Transverse colon (tissue), 4 donors: ENCODE measurements at regions of chr6 and their contacts with region 1.

Region 1: DNA sequence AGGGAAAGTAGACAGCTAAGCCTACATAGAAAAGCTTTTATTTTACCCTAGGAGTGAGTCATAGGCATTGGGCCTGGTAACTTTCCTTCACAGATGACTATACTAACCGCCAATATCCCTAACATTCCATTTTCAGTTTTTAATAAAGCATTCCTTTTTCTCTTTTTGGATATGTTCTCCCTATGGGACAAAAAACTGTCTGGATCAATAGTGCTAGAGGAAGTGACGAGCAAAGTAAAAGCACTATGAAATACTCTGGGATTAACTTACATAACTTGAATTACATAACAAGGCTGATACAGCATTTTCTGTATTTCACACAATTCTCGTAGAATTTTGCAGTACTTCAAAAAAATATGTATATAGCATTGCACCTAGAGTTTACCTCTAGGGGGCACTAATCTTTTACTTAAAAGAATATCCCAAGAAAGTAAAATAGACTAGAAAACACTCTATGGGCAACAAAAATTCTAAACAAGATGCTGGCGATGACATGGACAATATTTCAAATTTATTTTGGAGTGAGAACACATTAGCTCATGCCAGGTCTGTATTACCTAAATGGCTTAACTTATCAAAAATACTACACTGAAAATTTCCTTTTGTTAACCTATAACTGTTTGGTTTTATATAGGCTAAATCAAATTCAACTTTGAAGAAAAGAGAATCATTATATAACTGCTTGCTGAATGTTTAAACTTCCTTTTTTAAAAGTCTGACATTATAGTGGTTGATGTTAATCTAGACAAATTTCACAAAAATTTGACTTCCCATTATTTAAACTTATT is 66.3 kb upstream of the DST start:
- DNase-seq: no peak
- H3K4me3 ChIP-seq: no peak overlapping the region
- H3K27ac ChIP-seq: peak overlapping the region; percentile 10 to 47 (median 26)
- H3K4me1 ChIP-seq: peaks cover 0 to 40% (median 7%) of the 10 kb centered on the region in 4 donors
- H3K27me3 ChIP-seq: no peaks in the 10 kb centered on the region
- CTCF ChIP-seq: peak; percentile 65 to 71 (median 66)
- EP300 ChIP-seq: no peak
- POLR2A ChIP-seq: no peak

Region 2: DNA sequence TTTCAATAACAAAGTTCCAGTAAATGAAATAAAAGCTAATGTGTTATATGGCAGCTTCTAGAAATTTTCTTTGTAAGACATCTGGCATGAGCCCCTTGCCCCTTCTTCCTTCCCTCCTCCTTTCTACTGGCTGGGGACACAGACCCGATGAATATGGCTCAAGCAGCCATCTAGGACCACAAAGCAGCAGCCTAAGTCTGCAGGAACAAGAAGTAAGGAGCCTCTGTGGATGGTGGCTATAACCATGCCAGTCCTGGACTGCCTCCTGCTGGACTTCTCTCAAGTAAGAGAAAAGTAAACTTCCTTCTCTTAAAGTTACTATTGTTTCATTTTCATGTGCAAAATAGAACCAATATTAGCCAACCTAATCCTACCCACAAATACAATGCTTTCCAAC is 48.6 kb after region 1 on chr6:
- in situ Hi-C with region 1: no loop called
- intact Hi-C with region 1: loop called (anchors 2 kb)
- DNase-seq: peak; percentile 52
- H3K4me3 ChIP-seq: no peak overlapping the region
- H3K27ac ChIP-seq: peak overlapping the region in 3 of 4 donors; percentile 19 to 47 (median 28)
- H3K4me1 ChIP-seq: peaks cover 4 to 44% (median 16%) of the 10 kb centered on the region in 4 donors
- H3K27me3 ChIP-seq: no peaks in the 10 kb centered on the region
- CTCF ChIP-seq: peak; percentile 54 to 67 (median 55)
- EP300 ChIP-seq: no peak
- POLR2A ChIP-seq: no peak

Region 3: DNA sequence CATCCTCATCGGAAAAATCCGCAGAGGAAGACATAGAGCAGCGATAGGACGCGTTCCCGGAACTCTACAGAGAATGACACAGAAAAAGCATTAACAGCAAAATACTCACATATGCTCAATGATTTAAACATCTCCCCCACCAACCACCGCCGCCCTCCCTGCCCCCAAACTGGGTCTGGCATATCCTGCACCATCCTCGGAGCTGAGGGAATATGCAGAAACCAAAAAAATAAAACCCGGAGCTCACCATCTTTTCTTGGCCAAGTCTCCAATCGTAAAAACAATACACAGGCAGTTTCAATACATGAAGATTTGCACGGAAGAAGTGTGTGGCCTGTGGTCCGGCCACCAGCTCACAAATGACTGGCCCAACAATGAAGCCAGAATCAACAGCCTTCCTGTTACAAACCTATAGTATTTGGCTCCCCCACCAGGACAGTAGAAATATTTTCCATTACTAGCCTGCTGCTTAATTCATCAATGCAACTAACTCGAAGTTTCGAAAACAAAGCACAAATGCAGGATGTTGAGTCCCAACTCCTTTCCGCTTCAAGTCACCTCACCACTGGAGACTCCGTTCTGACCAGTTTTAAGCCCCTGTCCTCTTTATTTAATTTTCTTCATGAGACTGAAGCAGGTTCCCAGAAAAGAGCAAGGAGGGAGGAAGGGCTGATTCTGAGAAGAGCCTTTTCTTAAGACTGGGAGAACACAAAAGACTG is 142.7 kb after region 1 on chr6:
- in situ Hi-C with region 1: loop called in 2 of 4 experiments (anchors 25 kb)
- intact Hi-C with region 1: no loop called
- DNase-seq: no peak
- H3K4me3 ChIP-seq: peak overlapping the region in 3 of 4 donors; percentile 20 to 47 (median 33)
- H3K27ac ChIP-seq: peak overlapping the region; percentile 47 to 69 (median 64)
- H3K4me1 ChIP-seq: peaks cover 0 to 17% (median 3%) of the 10 kb centered on the region in 4 donors
- H3K27me3 ChIP-seq: no peaks in the 10 kb centered on the region
- CTCF ChIP-seq: peak; percentile 38 to 53 (median 40)
- EP300 ChIP-seq: no peak
- POLR2A ChIP-seq: no peak